PC-3 (cell line): ENCODE measurements at regions of chr2 and their contacts with region 1.

Region 1: GRCh38 chr2:127615501-127616166 is 30.3 kb upstream of the GPR17 start:
- DNase-seq: peak; percentile 97
- ATAC-seq: peak; percentile 59
- H3K4me3 ChIP-seq: peak overlapping the region; percentile 29; the same call in 1 of the 2 replicates
- H3K27ac ChIP-seq: peak overlapping the region; percentile 95
- H3K4me1 ChIP-seq: peaks cover 56% of the 10 kb centered on the region
- H3K27me3 ChIP-seq: no peaks in the 10 kb centered on the region
- CTCF ChIP-seq: no peak

Region 2: DNA sequence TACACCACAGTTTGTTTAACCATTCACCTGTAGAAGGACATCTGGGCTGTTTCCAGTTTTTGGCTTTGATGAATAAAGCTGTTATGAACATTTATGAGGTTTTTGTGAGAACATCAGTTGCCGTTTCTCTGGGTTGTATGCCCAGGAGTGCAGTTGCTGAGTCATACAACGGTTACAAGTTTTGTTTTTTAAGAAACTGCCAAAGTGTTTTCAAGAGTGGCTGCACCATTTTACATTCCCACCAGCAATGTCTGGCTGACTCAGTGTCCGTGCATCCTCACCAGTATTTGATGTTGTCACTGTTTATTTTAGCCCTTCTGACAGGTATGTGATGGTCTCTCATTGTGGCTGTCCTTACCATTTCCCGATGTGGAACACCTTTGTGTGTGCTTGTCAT is 17.7 kb before region 1 on chr2:
- CTCF ChIA-PET with region 1: no interaction called
- POLR2A ChIA-PET with region 1: no interaction called
- intact Hi-C with region 1: loop called (anchors 2 kb)
- DNase-seq: peak; percentile 96
- ATAC-seq: peak; percentile 84
- H3K4me3 ChIP-seq: no peak overlapping the region
- H3K27ac ChIP-seq: peak overlapping the region; percentile 83
- H3K4me1 ChIP-seq: peaks cover 40% of the 10 kb centered on the region
- H3K27me3 ChIP-seq: no peaks in the 10 kb centered on the region
- CTCF ChIP-seq: no peak

Region 3: DNA sequence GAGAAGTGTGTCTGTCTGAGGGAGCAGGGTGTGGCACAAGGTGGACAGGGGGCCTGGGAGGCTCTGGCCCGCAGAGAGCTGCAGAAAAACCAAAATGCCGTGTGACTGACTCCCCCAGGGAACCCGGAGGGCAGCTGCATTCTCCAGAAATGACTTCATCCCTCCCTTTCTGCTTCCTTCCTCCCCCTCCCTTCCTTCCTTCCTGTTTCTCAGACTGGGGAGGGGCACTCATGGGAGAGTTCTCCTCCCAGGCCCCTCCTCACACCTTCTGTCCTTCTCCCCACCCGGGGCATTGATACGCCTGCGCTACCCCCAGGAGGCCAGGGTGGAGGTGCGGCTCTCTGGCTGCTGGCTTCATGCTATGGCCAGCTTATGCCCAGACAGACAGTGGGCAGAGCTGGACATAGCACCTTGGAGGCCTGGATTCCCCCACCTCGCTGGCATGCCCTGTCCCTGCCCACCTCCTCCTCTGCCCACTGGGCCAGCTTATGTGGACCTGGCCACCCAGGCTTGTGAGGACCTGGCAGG is 22.2 kb after region 1 on chr2:
- CTCF ChIA-PET with region 1: no interaction called
- POLR2A ChIA-PET with region 1: no interaction called
- intact Hi-C with region 1: loop called (anchors 2 kb)
- DNase-seq: peak; percentile 97
- ATAC-seq: peak; percentile 82
- H3K4me3 ChIP-seq: no peak overlapping the region
- H3K27ac ChIP-seq: peak overlapping the region; percentile 99
- H3K4me1 ChIP-seq: peaks cover 26% of the 10 kb centered on the region
- H3K27me3 ChIP-seq: no peaks in the 10 kb centered on the region
- CTCF ChIP-seq: no peak